ENCODE measurements at regions of chr4 and their contacts with region 1.

Region 1: DNA sequence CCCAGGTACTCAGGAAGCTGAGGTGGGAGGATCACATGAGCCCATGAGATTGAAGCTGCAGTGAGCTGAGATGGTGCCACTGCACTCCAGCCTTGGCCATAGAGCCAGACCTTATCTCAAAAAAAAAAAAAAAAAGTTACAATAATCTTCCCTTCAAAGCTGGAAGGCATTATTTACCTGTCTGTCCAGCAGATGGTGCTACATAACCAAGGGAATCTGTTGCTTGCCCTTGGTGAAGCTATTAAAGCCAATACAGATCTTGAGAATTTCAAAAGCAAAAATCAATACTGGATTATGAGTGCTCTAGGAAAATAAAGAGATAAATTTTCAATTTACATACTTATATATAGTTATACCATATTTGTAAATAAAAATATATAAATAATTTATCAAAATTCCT is 25.9 kb downstream of the PKD2 start:
- DNase-seq: peak; percentile 69
- H3K4me3 ChIP-seq: no peak overlapping the region
- H3K27ac ChIP-seq: no peak overlapping the region
- H3K4me1 ChIP-seq: no peaks in the 10 kb centered on the region
- H3K27me3 ChIP-seq: no peaks in the 10 kb centered on the region
- CTCF ChIP-seq: peak; percentile 43 to 55
- POLR2A ChIP-seq: no peak

Region 2: DNA sequence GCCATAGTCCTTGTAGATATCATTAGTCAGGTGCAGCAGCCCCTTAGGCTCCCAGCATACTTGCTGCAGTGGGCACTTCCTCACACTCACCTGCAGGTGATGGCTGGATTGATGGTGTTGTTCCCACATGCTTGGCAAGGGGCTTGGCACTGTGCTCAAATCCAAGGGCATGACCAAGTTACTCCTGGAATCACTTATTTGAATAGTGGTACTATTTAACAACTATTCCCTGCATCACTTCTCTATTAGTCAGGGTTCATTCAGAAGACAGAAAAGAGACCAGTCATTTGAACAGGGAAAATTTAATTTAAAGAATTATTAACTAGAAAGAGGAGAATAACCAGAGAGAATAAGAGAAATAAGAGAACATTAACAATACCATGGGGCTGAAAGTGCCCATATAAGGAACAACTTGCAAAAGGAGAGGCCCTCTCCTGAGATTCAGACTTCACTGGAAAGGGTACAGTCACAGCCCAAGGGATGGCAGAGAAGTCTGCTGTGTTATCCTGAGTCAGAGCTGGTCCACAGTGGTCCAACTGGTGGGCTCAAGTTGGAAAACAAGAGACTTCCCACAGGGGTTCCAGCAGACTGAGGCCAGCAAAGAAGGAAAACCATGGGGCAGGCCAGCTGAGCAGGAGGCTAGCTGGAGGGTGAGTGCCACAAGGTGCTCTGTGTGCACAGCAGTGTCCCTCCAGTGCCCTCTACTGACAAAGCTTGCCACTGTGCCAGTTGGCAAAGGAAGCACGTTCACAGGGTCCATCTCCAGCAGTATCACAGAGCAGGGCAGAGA is 48.0 kb before region 1 on chr4:
- CTCF ChIA-PET with region 1: interaction called, 12 read pairs
- POLR2A ChIA-PET with region 1: no interaction called
- dilution Hi-C with region 1: no loop called
- intact Hi-C with region 1: no loop called
- DNase-seq: peak; percentile 66
- H3K4me3 ChIP-seq: no peak overlapping the region
- H3K27ac ChIP-seq: no peak overlapping the region
- H3K4me1 ChIP-seq: no peaks in the 10 kb centered on the region
- H3K27me3 ChIP-seq: peaks cover 2 to 3% of the 10 kb centered on the region in 2 experiments
- CTCF ChIP-seq: peak; percentile 63 to 79
- POLR2A ChIP-seq: no peak

Region 3: DNA sequence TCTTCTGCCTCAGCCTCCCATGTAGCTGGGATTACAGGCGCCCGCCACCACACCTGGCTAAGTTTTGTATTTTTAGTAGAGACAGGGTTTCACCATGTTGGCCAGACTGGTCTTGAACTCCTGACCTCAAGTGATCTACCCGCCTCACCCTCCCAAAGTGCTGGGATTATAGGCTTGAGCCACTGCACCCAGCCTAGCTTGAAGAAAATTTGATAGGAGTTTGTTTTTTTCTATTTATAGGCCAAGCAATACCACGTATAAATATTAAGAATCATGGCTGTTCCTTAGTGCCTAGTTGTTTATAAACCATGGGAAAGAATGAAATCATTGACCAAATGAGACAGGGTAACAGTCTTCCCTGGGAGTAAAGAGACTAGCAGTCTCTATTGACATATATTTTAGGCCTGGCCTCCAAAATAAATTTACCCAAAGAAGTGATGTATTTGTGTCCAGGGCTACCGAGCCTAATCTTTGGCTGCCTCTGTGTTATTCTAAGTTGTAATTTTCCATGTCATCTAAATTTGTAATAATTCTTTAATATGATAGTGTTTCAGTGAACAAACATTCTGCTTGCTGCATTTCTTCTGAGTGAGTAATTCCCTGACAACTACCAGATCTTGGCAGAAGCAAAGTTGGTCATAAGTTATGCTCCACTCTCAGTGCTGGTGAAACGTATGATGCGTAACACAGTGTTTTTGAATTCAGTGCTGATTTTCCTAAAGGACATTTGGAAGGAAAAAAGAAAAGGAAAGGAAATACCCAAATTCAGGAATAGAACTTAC is 15.6 kb before region 1 on chr4:
- CTCF ChIA-PET with region 1: interaction called, 30 read pairs
- POLR2A ChIA-PET with region 1: no interaction called
- dilution Hi-C with region 1: no loop called
- intact Hi-C with region 1: no loop called
- DNase-seq: peak; percentile 94
- H3K4me3 ChIP-seq: no peak overlapping the region
- H3K27ac ChIP-seq: peak overlapping the region; percentile 88
- H3K4me1 ChIP-seq: peaks cover 21% of the 10 kb centered on the region
- H3K27me3 ChIP-seq: no peaks in the 10 kb centered on the region
- CTCF ChIP-seq: no peak
- POLR2A ChIP-seq: no peak

Region 4: DNA sequence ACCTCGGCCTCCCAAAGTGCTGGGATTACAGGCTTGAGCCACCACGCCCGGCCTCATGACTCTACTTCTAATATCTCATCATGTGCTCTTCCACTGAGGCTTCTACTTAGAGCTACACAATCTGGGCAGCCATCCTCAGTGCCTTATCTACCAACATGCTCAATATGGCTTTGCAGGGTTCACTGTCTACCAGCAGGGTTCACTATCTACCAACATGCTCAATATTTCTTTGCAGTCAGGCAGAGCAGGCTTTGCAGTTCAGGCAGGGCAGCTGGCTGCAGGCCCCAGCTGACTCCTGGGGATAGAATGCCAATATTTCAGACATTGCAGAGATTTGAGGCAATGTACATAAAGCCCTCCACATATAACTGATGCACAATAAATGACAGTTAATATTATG is 21.6 kb after region 1 on chr4:
- CTCF ChIA-PET with region 1: interaction called, 52 read pairs
- POLR2A ChIA-PET with region 1: no interaction called
- dilution Hi-C with region 1: no loop called
- intact Hi-C with region 1: no loop called
- DNase-seq: peak; percentile 77
- H3K4me3 ChIP-seq: no peak overlapping the region
- H3K27ac ChIP-seq: no peak overlapping the region
- H3K4me1 ChIP-seq: peaks cover 4% of the 10 kb centered on the region
- H3K27me3 ChIP-seq: no peaks in the 10 kb centered on the region
- CTCF ChIP-seq: peak; percentile 46 to 72
- POLR2A ChIP-seq: no peak

Region 5: DNA sequence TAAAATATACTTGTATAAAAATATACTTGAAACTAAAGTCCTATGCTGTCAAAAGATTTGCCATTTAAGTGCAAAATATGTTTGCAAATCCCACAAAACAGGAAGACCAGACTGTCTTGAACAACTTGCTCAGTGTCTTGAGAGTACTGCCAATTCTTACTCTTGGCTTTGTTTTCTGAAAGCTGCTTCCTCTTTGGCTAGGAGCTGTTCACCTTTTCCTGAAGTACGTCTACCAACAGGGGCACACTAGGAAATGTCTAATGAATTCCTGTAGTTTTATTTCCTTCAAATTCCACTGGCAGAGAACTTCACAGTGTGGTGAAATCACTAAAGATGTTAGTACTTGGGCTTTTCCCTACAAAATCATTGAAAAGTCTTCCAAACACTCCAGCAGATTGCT is 171.6 kb after region 1 on chr4:
- CTCF ChIA-PET with region 1: interaction called, 295 read pairs
- POLR2A ChIA-PET with region 1: no interaction called
- dilution Hi-C with region 1: no loop called
- intact Hi-C with region 1: loop called (anchors 1 kb)
- DNase-seq: peak; percentile 90
- H3K4me3 ChIP-seq: peak overlapping the region in 1 of 3 experiments; percentile 28
- H3K27ac ChIP-seq: peak overlapping the region; percentile 48
- H3K4me1 ChIP-seq: peaks cover 15% of the 10 kb centered on the region
- H3K27me3 ChIP-seq: no peaks in the 10 kb centered on the region
- CTCF ChIP-seq: peak in 1 of 2 donors; percentile 5
- POLR2A ChIP-seq: no peak

Region 6: GRCh38 chr4:88514557-88515511 is 481.5 kb after region 1 on chr4:
- CTCF ChIA-PET with region 1: interaction called, 21 read pairs
- POLR2A ChIA-PET with region 1: interaction called, 4 read pairs
- dilution Hi-C with region 1: no loop called
- intact Hi-C with region 1: loop called (anchors 1 kb)
- DNase-seq: no peak
- H3K4me3 ChIP-seq: no peak overlapping the region
- H3K27ac ChIP-seq: no peak overlapping the region
- H3K4me1 ChIP-seq: peaks cover 10% of the 10 kb centered on the region
- H3K27me3 ChIP-seq: no peaks in the 10 kb centered on the region
- CTCF ChIP-seq: no peak
- POLR2A ChIP-seq: no peak

Region 7: DNA sequence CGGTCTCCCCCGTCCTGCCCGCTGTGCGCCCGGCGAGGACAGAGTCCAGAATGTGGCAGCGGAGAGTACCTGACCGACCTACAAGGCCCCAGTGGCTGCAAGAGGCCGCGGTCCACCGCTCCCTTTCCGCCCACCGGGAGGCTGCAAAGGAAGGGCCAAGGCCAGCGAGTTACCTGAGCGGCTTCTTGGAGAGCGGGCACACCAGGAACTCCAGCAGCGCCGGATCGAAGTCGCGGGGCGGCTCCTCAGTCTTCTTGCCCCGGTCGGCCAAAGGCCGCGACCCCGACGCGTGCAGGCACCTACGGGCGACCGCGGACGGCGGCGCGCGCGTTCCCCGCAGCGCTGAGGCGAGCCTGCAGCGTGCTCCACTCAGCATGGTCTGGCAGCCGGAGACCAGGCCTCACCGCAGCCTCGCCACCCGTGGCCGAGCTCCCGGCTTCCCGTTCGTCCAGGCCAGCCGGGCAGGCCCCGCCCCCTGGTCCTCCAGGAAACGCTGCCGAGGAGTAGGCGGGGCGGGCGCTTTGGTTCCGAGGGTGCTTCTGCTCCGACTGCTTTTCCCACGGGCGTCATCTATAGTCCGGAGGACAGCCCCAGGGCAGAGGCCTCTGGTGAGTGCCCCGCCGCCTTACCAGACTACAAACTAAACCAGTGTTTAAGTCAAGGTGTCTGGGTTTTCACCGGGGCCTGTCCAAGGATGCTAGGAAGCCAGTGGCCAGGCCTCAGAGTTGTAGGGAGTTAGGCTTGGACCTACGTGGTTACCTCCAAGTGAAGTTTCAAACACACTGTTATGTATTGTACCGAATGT is 490.2 kb after region 1 on chr4 and contains the start of gene PYURF:
- CTCF ChIA-PET with region 1: interaction called, 6 read pairs
- POLR2A ChIA-PET with region 1: no interaction called
- dilution Hi-C with region 1: no loop called
- intact Hi-C with region 1: loop called (anchors 1 kb)
- DNase-seq: peak; percentile 95
- H3K4me3 ChIP-seq: peak within 1 kb of the TSS; percentile 91 to 93 (median 92)
- H3K27ac ChIP-seq: peak within 1 kb of the TSS; percentile 86
- H3K4me1 ChIP-seq: peaks cover 16% of the 10 kb centered on the region
- H3K27me3 ChIP-seq: no peaks in the 10 kb centered on the region
- CTCF ChIP-seq: no peak
- POLR2A ChIP-seq: peak; percentile 95
- total RNA-seq, gene PYURF: 79.7 and 81.8 TPM in 2 replicates